Transverse colon (tissue), 4 donors: ENCODE measurements at regions of chr1 and their contacts with region 1.

Region 1: DNA sequence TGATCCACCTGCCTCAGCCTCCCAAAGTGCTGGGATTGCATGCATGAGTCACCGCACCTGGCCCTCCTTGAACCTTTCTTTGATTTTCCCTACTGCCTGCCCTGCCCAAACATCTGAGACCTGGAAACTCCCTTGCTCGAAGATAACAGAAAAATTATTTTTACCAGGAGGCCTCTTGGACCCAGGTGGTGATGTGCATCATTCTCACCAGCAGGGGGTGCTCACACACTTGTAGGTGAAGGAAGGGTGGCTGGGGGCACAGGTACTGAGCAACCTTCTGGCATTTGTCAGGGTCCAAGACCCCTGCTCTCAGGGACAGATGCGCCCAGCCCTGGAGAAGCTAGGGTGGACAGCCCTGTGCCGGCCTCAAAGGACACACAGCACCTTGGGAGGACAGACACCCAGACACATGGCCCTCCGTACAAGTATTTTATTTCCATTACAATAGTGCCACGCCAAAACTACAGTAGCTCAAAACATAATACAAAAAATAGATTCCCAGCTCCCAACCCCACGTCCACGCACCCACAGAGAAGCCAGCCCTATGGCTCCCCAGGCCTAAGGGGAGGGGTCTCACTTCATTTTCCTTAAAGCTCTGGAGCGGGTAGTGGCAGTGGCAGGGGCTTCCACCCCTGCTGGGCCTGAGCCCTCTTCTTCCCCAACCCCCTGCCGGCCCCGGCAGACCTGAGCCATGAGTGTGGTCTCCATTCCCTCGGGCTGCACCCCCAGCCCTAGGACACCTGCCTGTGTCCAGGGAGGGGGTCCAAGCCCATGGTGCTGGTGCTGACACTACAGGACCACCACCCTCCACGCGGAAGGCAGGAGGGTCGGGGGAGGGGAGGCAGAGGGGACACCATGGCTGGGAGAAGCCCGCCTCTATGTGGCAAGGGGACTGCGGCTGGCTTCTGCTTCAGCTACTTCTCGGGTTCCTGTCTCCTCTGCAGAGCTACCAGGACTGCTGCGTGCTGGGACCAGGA is 40.4 kb upstream of the EIF4G3 start:
- DNase-seq: peak; percentile 63
- H3K4me3 ChIP-seq: no peak overlapping the region
- H3K27ac ChIP-seq: no peak overlapping the region
- H3K4me1 ChIP-seq: no peaks in the 10 kb centered on the region
- H3K27me3 ChIP-seq: no peaks in the 10 kb centered on the region
- CTCF ChIP-seq: peak; percentile 67 to 76 (median 73)
- EP300 ChIP-seq: no peak
- POLR2A ChIP-seq: no peak

Region 2: GRCh38 chr1:20530906-20531305 is 686.2 kb before region 1 on chr1:
- in situ Hi-C with region 1: loop called in 1 of 4 experiments (anchors 25 kb)
- intact Hi-C with region 1: no loop called
- DNase-seq: no peak
- H3K4me3 ChIP-seq: no peak overlapping the region
- H3K27ac ChIP-seq: no peak overlapping the region
- H3K4me1 ChIP-seq: no peaks in the 10 kb centered on the region
- H3K27me3 ChIP-seq: peaks cover 65% of the 10 kb centered on the region
- CTCF ChIP-seq: no peak
- EP300 ChIP-seq: no peak
- POLR2A ChIP-seq: no peak